ENCODE measurements at regions of chr14 and their contacts with region 1.

Region 1: GRCh38 chr14:58244556-58245387 is at the start of gene PSMA3:
- DNase-seq: peak; percentile 98
- H3K4me3 Mint-ChIP-seq: peak within 1 kb of the TSS; percentile 95
- H3K27ac Mint-ChIP-seq: peak within 1 kb of the TSS; percentile 98
- H3K4me1 Mint-ChIP-seq: peaks cover 41% of the 10 kb centered on the region
- H3K27me3 Mint-ChIP-seq: no peaks in the 10 kb centered on the region
- total RNA-seq, gene PSMA3: 233 to 245 TPM

Region 2: DNA sequence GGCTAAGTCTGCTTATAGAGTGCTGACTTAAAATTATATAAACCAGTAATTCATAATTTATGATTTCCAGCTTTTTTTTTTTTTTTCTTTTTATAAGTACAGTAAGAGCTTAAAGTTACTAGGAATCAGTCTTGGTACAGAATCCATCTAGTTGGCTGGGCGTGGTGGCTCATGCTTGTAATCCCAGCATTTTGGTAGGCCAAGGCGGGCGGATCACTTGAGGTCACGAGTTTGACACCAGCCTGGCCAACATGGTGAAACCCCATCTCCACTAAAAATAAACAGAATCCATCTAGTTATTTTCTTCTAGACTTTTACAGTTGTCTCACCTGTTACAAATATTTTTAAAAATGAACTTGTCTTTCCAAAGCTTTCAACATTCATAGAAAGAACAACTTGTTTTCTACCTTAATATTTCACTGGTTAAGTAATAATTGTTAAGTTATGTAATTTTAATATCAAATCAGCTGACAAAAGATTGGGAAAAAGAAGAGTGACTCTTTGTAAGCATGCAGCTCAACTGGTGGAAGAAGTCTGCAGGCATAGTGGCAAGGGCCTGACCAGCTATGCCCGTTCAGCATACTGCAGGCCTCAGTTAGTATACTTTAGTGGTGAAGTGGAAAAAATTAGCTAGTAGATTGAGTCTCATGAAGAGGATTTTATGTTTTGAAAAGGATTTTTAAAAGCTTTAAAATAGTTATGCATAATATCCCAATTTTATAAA is 17.5 kb before region 1 on chr14:
- CTCF ChIA-PET with region 1: no interaction called
- POLR2A ChIA-PET with region 1: no interaction called
- DNase-seq: no peak
- H3K4me3 Mint-ChIP-seq: no peak overlapping the region
- H3K27ac Mint-ChIP-seq: no peak overlapping the region
- H3K4me1 Mint-ChIP-seq: no peaks in the 10 kb centered on the region
- H3K27me3 Mint-ChIP-seq: no peaks in the 10 kb centered on the region

Region 3: GRCh38 chr14:58292187-58292586 is 47.4 kb after region 1 on chr14:
- CTCF ChIA-PET with region 1: no interaction called
- POLR2A ChIA-PET with region 1: interaction called, 10 read pairs
- DNase-seq: no peak
- H3K4me3 Mint-ChIP-seq: no peak overlapping the region
- H3K27ac Mint-ChIP-seq: no peak overlapping the region
- H3K4me1 Mint-ChIP-seq: peaks cover 59% of the 10 kb centered on the region
- H3K27me3 Mint-ChIP-seq: no peaks in the 10 kb centered on the region

Region 4: DNA sequence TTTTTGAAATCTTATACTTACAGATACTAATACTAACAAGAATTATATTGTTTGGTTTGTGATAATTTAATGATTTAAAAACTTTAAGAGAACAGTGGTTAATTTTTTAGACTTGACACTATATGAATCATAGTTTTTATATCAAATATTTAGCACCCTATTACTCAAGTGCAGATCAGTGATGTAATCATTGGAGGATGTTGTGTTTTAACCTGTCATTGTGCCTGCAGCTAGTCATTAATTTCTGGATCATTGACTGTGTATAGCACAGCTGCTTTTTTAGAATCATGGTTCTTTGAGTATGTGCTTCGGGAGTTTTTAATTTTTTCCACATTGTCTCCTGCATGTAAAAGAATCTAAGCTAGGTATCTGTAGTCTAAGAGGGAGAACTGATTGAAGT is 70.8 kb after region 1 on chr14:
- CTCF ChIA-PET with region 1: no interaction called
- POLR2A ChIA-PET with region 1: no interaction called
- DNase-seq: no peak
- H3K4me3 Mint-ChIP-seq: no peak overlapping the region
- H3K27ac Mint-ChIP-seq: no peak overlapping the region
- H3K4me1 Mint-ChIP-seq: no peaks in the 10 kb centered on the region
- H3K27me3 Mint-ChIP-seq: no peaks in the 10 kb centered on the region